ENCODE measurements at regions of chrX and their contacts with region 1.

Region 1: DNA sequence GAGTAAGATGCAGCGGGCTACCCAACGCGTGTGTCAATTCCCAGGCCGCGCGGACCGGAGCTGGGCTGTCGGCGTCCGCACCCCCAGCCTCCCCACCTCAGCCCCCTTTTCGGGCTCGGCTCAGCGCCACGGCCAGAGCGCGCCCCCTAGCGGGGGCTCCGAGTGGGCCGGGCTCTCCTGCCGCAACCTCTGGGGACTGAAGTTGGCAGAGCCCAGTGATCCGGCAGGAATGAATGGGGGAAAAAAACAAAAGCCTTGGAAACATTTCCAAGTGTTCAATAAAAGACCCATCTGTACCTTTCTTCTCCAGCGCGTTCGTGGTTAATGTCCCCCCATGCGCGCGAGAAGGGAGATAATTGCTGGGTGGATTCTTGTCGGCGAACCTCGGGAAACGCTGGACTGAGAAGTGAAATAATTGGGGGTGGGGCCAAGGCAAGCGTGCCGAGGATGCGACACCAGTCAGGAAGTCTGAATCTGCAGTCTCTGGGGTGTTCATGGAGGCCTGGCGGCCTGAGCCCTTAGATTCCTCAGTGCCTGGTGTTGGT is 5.2 kb upstream of the ARX start:
- DNase-seq: no peak
- H3K4me3 ChIP-seq: no peak overlapping the region
- H3K27ac ChIP-seq: no peak overlapping the region
- H3K4me1 ChIP-seq: no peaks in the 10 kb centered on the region
- H3K27me3 ChIP-seq: peaks cover 77% of the 10 kb centered on the region
- CTCF ChIP-seq: peak; percentile 38

Region 2: DNA sequence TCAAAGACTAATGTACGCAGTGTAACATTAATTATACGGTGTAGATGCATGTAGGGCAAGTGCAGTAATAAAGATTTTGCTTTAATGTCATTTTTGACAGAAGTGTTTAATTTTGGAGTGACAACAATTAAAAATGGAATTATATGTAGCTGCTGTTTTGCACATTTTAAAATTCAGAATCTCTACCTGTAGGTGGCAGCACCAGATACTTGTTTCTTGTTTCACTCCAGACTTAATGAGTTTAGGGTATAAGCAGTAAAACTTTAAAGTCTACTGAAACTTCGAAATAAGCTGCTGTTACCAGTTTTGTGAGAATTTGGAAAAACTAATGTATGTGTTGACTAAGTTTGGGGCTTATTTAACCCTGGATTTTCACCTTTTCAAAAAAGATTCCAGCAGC is 182.3 kb before region 1 on chrX:
- intact Hi-C with region 1: loop called (anchors 5 kb)
- DNase-seq: peak; percentile 21
- H3K4me3 ChIP-seq: no peak overlapping the region
- H3K27ac ChIP-seq: no peak overlapping the region
- H3K4me1 ChIP-seq: no peaks in the 10 kb centered on the region
- H3K27me3 ChIP-seq: no peaks in the 10 kb centered on the region
- CTCF ChIP-seq: peak; percentile 47

Region 3: GRCh38 chrX:25166546-25166945 is 145.6 kb after region 1 on chrX:
- intact Hi-C with region 1: no loop called
- DNase-seq: no peak
- H3K4me3 ChIP-seq: no peak overlapping the region
- H3K27ac ChIP-seq: no peak overlapping the region
- H3K4me1 ChIP-seq: no peaks in the 10 kb centered on the region
- H3K27me3 ChIP-seq: no peaks in the 10 kb centered on the region
- CTCF ChIP-seq: no peak

Measured in colonic mucosa (tissue), 4 donors.